MCF 10A (cell line): ENCODE measurements at regions of chr12 and their contacts with region 1.

Region 1: GRCh38 chr12:122449353-122449752 is 26.9 kb upstream of the CLIP1 start:
- DNase-seq: peak; percentile 90
- H3K4me3 Mint-ChIP-seq: no peak overlapping the region
- H3K27ac Mint-ChIP-seq: no peak overlapping the region
- H3K4me1 Mint-ChIP-seq: peaks cover 15% of the 10 kb centered on the region
- H3K27me3 Mint-ChIP-seq: no peaks in the 10 kb centered on the region
- CTCF ChIP-seq: no peak

Region 2: GRCh38 chr12:122437656-122438121 is 11.7 kb before region 1 on chr12:
- CTCF ChIA-PET with region 1: no interaction called
- POLR2A ChIA-PET with region 1: interaction called, 21 read pairs
- intact Hi-C with region 1: no loop called
- DNase-seq: peak; percentile 88
- H3K4me3 Mint-ChIP-seq: peak overlapping the region; percentile 13
- H3K27ac Mint-ChIP-seq: no peak overlapping the region
- H3K4me1 Mint-ChIP-seq: peaks cover 22% of the 10 kb centered on the region
- H3K27me3 Mint-ChIP-seq: no peaks in the 10 kb centered on the region
- CTCF ChIP-seq: no peak

Region 3: GRCh38 chr12:122571821-122572220 is 122.5 kb after region 1 on chr12:
- CTCF ChIA-PET with region 1: no interaction called
- POLR2A ChIA-PET with region 1: no interaction called
- intact Hi-C with region 1: no loop called
- DNase-seq: no peak
- H3K4me3 Mint-ChIP-seq: no peak overlapping the region
- H3K27ac Mint-ChIP-seq: no peak overlapping the region
- H3K4me1 Mint-ChIP-seq: peaks cover 6% of the 10 kb centered on the region
- H3K27me3 Mint-ChIP-seq: no peaks in the 10 kb centered on the region
- CTCF ChIP-seq: no peak